ENCODE measurements at regions of chr5 and their contacts with region 1.

Region 1: DNA sequence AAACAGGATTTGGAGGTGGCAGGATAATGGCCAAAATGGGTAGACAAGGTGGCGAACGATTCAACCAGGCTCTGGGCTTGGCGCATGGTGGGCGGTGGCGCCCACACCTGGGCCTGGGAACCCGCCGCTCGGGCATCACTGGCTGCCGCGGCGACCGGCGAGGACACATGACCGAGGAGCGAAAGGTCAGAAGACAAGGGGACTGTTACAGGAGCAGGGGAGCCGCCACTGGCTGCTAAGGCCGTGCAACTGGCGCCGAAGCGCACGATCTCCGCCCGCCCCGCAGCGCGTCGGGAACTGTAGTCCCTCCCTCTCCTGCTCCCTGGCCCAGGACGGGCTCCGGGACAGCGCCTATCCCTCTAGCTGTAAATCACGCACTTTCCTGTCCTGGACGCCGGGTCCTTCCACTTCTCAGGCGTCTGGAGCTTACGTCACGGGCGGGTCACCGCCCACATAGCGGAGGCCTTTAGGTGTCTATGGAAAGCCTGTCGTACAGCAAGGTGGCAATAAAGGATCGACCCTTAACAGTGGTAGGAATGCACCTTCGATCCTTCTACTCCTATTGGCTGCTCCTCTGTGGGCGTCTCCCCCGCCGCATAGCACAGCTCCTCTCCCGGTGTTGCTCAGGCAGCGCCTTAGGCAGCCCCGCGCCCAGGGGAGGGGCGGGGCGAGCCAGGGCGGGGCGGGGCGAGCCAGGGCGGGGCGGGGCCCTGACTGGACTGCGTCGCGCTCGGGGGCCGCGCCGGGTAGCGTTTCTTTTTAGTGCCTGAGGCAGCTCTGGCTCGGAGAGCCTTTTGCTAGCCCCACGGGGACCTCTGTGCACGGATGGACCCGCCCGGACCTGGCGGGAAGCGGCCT is at the start of gene ICE1:
- DNase-seq: peak; percentile 83
- H3K4me3 ChIP-seq: peak within 1 kb of the TSS; percentile 87
- CTCF ChIP-seq: no peak

Region 2: GRCh38 chr5:4868109-4868735 is 554.0 kb before region 1 on chr5:
- CTCF ChIA-PET with region 1: interaction called, 21 read pairs
- POLR2A ChIA-PET with region 1: no interaction called
- DNase-seq: no peak
- H3K4me3 ChIP-seq: no peak overlapping the region
- CTCF ChIP-seq: peak; percentile 73

Region 3: GRCh38 chr5:4879693-4880303 is 542.4 kb before region 1 on chr5:
- CTCF ChIA-PET with region 1: interaction called, 176 read pairs
- POLR2A ChIA-PET with region 1: no interaction called
- DNase-seq: peak; percentile 19
- H3K4me3 ChIP-seq: no peak overlapping the region
- CTCF ChIP-seq: peak; percentile 96

Region 4: GRCh38 chr5:5141625-5142532 is 280.3 kb before region 1 on chr5:
- CTCF ChIA-PET with region 1: interaction called, 112 read pairs
- POLR2A ChIA-PET with region 1: interaction called, 5 read pairs
- DNase-seq: no peak
- H3K4me3 ChIP-seq: no peak overlapping the region
- CTCF ChIP-seq: peak; percentile 40

Region 5: GRCh38 chr5:5165541-5166002 is 256.6 kb before region 1 on chr5:
- CTCF ChIA-PET with region 1: interaction called, 11 read pairs
- POLR2A ChIA-PET with region 1: no interaction called
- DNase-seq: no peak
- H3K4me3 ChIP-seq: no peak overlapping the region
- CTCF ChIP-seq: no peak

Region 6: GRCh38 chr5:5398046-5398445 is 24.1 kb before region 1 on chr5:
- CTCF ChIA-PET with region 1: interaction called, 49 read pairs
- POLR2A ChIA-PET with region 1: interaction called, 3 read pairs
- DNase-seq: no peak
- H3K4me3 ChIP-seq: no peak overlapping the region
- CTCF ChIP-seq: no peak

Region 7: GRCh38 chr5:5409151-5409810 is 12.9 kb before region 1 on chr5:
- CTCF ChIA-PET with region 1: interaction called, 43 read pairs
- POLR2A ChIA-PET with region 1: no interaction called
- DNase-seq: no peak
- H3K4me3 ChIP-seq: no peak overlapping the region
- CTCF ChIP-seq: no peak

Measured in AG04449 (cell line).